ENCODE measurements at regions of chr19 and their contacts with region 1.

Region 1: DNA sequence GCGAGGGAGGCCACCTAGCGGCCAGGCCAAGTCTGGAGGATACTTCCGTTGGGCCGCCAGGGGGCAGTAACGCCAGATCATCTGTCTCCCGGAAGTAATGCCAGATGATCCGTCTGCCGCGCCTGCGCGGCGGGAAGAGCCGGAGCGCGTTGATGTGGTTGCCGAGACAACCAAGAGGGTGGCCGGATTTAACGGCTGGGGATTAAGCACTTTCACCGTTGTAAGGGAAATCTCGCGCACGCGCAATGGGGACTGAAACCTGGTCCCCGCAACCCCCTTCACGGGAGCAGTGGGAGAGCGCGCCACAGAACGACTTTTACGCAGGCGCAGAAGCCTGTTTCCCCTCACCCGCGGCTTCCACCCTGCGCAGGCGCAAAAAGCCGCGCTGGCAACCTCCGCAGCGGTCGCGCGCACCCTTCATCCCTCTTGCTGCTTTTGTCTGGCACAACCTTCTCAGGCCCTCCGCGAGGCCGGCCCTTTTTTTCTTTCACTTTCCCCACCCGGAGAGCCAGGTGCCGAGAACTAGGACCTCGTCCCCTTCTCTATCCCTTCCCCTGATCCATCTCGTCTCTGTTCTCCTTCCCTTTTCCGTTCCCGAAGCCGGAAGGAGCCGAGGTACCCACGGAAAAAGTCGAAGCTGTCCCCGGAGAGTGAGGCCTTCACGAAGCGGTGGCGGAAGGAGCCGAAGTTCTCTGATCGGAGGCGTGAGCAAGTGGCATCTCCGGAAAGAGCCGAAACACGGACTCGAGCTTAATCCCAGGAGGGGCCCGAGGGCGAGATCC is 886 bp upstream of the U2AF2 start:
- DNase-seq: peak; percentile 100
- H3K4me3 Mint-ChIP-seq: peak overlapping the region; percentile 84
- H3K27ac Mint-ChIP-seq: peak overlapping the region; percentile 98
- H3K4me1 Mint-ChIP-seq: peaks cover 22% of the 10 kb centered on the region
- H3K27me3 Mint-ChIP-seq: no peaks in the 10 kb centered on the region
- CTCF ChIP-seq: peak; percentile 99

Region 2: GRCh38 chr19:55643348-55644176 is 10.4 kb before region 1 on chr19 and contains the start of gene ZNF581:
- CTCF ChIA-PET with region 1: interaction called, 11 read pairs
- POLR2A ChIA-PET with region 1: interaction called, 22 read pairs
- intact Hi-C with region 1: loop called (anchors 1 kb)
- DNase-seq: peak; percentile 79
- H3K4me3 Mint-ChIP-seq: peak within 1 kb of the TSS; percentile 82
- H3K27ac Mint-ChIP-seq: peak within 1 kb of the TSS; percentile 94
- H3K4me1 Mint-ChIP-seq: peaks cover 18% of the 10 kb centered on the region
- H3K27me3 Mint-ChIP-seq: no peaks in the 10 kb centered on the region
- CTCF ChIP-seq: no peak
- total RNA-seq, gene ZNF581: 22.3 and 25.7 TPM in 2 replicates

Region 3: GRCh38 chr19:55670280-55671053 is 16.5 kb after region 1 on chr19:
- CTCF ChIA-PET with region 1: interaction called, 18 read pairs
- POLR2A ChIA-PET with region 1: interaction called, 12 read pairs
- intact Hi-C with region 1: no loop called
- DNase-seq: no peak
- H3K4me3 Mint-ChIP-seq: no peak overlapping the region
- H3K27ac Mint-ChIP-seq: no peak overlapping the region
- H3K4me1 Mint-ChIP-seq: peaks cover 16% of the 10 kb centered on the region
- H3K27me3 Mint-ChIP-seq: no peaks in the 10 kb centered on the region
- CTCF ChIP-seq: no peak

Region 4: GRCh38 chr19:55801416-55801815 is 147.5 kb after region 1 on chr19:
- CTCF ChIA-PET with region 1: no interaction called
- POLR2A ChIA-PET with region 1: no interaction called
- intact Hi-C with region 1: no loop called
- DNase-seq: no peak
- H3K4me3 Mint-ChIP-seq: no peak overlapping the region
- H3K27ac Mint-ChIP-seq: no peak overlapping the region
- H3K4me1 Mint-ChIP-seq: no peaks in the 10 kb centered on the region
- H3K27me3 Mint-ChIP-seq: no peaks in the 10 kb centered on the region
- CTCF ChIP-seq: no peak